SK-N-SH (cell line): ENCODE measurements at regions of chr15 and their contacts with region 1.

Region 1: DNA sequence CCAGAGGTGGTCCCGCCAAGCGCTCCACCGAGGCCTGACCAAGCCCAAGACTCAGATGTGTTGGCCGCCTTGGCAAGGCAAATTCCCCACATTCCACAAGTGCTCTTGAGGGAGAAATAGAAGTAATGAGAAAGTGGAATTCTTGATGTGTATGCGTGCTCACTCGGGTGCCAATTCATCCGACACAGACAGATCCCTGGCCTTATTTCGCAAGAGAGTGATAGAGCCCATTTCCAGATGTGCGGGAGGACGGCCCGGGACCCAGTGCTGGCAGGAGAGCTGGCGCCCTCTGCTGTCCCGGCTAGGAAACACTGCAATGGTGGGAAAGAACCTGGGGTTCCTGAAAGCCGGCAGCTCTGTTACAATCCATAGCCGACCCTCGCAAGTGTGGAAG is 76.0 kb downstream of the HMG20A start:
- DNase-seq: peak; percentile 81
- H3K4me3 ChIP-seq: peak overlapping the region; percentile 15 to 54; a peak in 2 of 4 replicates
- H3K27ac ChIP-seq: peak overlapping the region; percentile 75 to 98
- H3K4me1 ChIP-seq: peaks cover 47 to 49% of the 10 kb centered on the region in 2 experiments
- H3K27me3 ChIP-seq: no peaks in the 10 kb centered on the region
- CTCF ChIP-seq: peak; percentile 92
- EP300 ChIP-seq: 0 out of 4 replicates have a peak, but pooled peaks of 1 of the 2 experiments have one; percentile 6
- RAD21 ChIP-seq: peak; percentile 90

Region 2: DNA sequence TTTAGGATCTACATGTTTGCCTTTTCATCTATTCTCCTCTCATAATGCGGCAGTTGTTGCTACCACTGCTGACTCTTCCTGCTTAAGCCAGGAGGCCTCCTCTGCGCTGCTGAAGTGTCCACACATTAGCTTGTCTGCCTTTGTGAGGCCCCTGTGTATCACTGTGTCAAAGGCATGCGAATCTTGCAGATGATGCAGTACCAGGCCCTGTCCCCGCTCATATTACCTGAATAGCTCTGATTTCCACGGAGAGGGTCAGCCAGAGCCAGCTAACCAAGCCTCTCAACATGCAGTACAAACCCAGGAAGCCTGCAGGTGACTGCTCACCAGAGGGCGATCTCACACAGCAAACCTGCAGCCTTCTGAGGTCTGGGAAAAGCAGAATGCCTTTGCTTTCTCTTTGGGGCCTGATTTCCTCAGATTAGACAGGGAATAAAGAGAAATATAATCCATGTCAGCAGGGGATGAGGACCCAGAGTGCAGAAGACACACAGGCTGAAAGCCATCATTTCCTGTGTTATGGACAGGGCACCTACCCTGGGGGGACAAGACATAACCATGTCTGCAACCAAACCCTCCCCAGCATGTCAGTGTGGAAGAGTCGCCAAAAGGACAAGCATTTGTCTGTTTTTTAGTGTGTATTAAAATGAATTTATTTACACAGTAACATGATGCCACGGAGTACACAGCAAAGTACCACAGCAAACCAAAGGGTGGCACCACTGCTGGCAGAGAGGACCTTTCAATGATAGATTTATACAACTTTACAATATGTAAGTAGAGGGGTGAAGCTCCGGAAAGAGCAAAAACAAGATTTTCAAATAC is 389.0 kb before region 1 on chr15:
- CTCF ChIA-PET with region 1: interaction called, 40 read pairs
- POLR2A ChIA-PET with region 1: no interaction called
- DNase-seq: peak; percentile 72
- H3K4me3 ChIP-seq: no peak overlapping the region
- H3K27ac ChIP-seq: peak overlapping the region in 1 of 2 experiments; percentile 22; a peak in 1 of 4 replicates
- H3K4me1 ChIP-seq: peaks cover 0 to 17% of the 10 kb centered on the region in 2 experiments; a peak in 2 of 4 replicates
- H3K27me3 ChIP-seq: no peaks in the 10 kb centered on the region
- CTCF ChIP-seq: peak; percentile 68
- EP300 ChIP-seq: no peak
- RAD21 ChIP-seq: peak; percentile 89

Region 3: GRCh38 chr15:77179541-77179998 is 317.1 kb before region 1 on chr15:
- CTCF ChIA-PET with region 1: interaction called, 49 read pairs
- POLR2A ChIA-PET with region 1: no interaction called
- DNase-seq: no peak
- H3K4me3 ChIP-seq: no peak overlapping the region
- H3K27ac ChIP-seq: no peak overlapping the region
- H3K4me1 ChIP-seq: no peaks in the 10 kb centered on the region
- H3K27me3 ChIP-seq: no peaks in the 10 kb centered on the region
- CTCF ChIP-seq: no peak
- EP300 ChIP-seq: no peak
- RAD21 ChIP-seq: no peak

Region 4: DNA sequence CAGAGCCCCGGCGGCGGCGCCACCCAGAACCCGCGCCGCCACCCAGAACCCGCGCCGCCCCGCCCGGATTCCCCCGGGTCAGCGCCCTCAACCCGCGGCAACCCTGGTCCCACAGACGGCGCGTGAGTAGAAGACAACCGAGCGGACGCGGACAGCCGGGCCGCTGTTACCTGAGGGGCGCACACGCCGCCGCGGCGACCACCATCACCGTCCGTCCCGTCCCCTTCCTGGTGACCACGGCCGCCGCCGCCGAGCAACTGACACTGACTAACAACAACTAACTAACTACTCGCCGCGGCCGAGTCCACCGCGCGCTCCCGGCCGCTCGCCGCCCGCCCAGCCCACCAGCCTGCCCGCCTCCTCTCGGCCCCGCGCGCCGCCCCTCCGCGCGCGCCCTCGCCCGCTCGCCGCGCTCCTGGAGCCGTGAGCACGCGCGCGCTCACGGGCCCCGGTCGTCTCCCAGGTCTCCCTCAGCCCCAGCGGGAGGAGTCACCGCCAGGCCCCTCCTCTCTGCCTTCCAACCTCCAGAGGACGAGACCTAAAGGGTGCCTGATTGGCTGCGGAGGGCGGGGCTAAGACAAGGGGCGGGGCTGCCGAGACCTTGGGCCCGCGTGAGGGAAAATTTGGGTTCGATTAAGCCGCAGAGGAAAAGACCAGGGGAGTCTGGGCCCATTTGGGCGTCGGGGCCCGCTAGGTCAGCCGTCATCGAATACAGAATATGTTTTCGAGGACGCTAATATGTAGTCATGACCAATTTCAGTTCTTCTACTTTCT is 76.7 kb before region 1 on chr15 and contains the start of gene PEAK1:
- CTCF ChIA-PET with region 1: interaction called, 14 read pairs
- POLR2A ChIA-PET with region 1: no interaction called
- DNase-seq: peak; percentile 95
- H3K4me3 ChIP-seq: peak within 1 kb of the TSS; percentile 71 to 93
- H3K27ac ChIP-seq: peak within 1 kb of the TSS; percentile 94 to 99
- H3K4me1 ChIP-seq: peaks cover 20 to 24% of the 10 kb centered on the region in 2 experiments
- H3K27me3 ChIP-seq: no peaks in the 10 kb centered on the region
- CTCF ChIP-seq: no peak
- EP300 ChIP-seq: no peak
- RAD21 ChIP-seq: no peak
- polyA plus RNA-seq, gene PEAK1: 9.0 and 13.0 TPM in 2 replicates

Region 5: DNA sequence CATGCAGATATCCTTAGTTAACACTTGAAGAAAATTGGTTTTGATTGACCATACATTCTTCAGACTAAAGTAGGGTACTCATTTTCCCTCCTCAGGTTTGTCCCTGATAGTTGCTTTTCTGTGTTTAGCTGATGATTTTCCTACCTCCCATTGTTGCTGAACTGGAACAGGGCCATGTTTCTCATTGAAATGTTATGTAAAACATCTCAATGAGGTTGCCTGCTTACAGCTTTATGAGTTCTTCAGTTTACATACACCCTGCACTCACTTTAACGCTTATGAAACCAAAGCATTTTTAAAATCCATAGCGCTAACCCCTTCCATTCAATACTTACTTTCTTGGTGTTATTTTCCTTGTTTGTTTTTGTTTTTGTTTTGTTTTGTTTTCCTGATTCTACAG is 14.1 kb before region 1 on chr15:
- CTCF ChIA-PET with region 1: interaction called, 16 read pairs
- POLR2A ChIA-PET with region 1: interaction called, 3 read pairs
- DNase-seq: no peak
- H3K4me3 ChIP-seq: no peak overlapping the region
- H3K27ac ChIP-seq: peak overlapping the region; percentile 53 to 74; a peak in 3 of 4 replicates
- H3K4me1 ChIP-seq: peaks cover 4 to 44% of the 10 kb centered on the region in 2 experiments
- H3K27me3 ChIP-seq: no peaks in the 10 kb centered on the region
- CTCF ChIP-seq: no peak
- EP300 ChIP-seq: peak in 1 of 2 experiments; percentile 42; a peak in 1 of 4 replicates
- RAD21 ChIP-seq: no peak

Region 6: GRCh38 chr15:77526791-77527778 is 30.4 kb after region 1 on chr15:
- CTCF ChIA-PET with region 1: interaction called, 15 read pairs
- POLR2A ChIA-PET with region 1: interaction called, 4 read pairs
- DNase-seq: peak; percentile 55
- H3K4me3 ChIP-seq: no peak overlapping the region
- H3K27ac ChIP-seq: no peak overlapping the region; a peak in 1 of 4 replicates
- H3K4me1 ChIP-seq: peaks cover 0 to 32% of the 10 kb centered on the region in 2 experiments; a peak in 2 of 4 replicates
- H3K27me3 ChIP-seq: no peaks in the 10 kb centered on the region
- CTCF ChIP-seq: no peak
- EP300 ChIP-seq: no peak
- RAD21 ChIP-seq: no peak

Region 7: GRCh38 chr15:77592763-77593162 is 96.1 kb after region 1 on chr15:
- CTCF ChIA-PET with region 1: no interaction called
- POLR2A ChIA-PET with region 1: no interaction called
- DNase-seq: no peak
- H3K4me3 ChIP-seq: no peak overlapping the region
- H3K27ac ChIP-seq: no peak overlapping the region
- H3K4me1 ChIP-seq: peaks cover 0 to 12% of the 10 kb centered on the region in 2 experiments; a peak in 1 of 4 replicates
- H3K27me3 ChIP-seq: no peaks in the 10 kb centered on the region
- CTCF ChIP-seq: no peak
- EP300 ChIP-seq: no peak
- RAD21 ChIP-seq: no peak